Prostate gland (tissue), 2 donors: ENCODE measurements at regions of chr2 and their contacts with region 1.

Region 1: GRCh38 chr2:36461039-36461681 is 105.6 kb downstream of the CRIM1 start:
- DNase-seq: no peak
- H3K4me3 ChIP-seq: no peak overlapping the region
- H3K27ac ChIP-seq: peak overlapping the region in 1 of 2 donors; percentile 23
- H3K4me1 ChIP-seq: no peaks in the 10 kb centered on the region
- H3K27me3 ChIP-seq: no peaks in the 10 kb centered on the region
- CTCF ChIP-seq: no peak
- POLR2A ChIP-seq: no peak

Region 2: DNA sequence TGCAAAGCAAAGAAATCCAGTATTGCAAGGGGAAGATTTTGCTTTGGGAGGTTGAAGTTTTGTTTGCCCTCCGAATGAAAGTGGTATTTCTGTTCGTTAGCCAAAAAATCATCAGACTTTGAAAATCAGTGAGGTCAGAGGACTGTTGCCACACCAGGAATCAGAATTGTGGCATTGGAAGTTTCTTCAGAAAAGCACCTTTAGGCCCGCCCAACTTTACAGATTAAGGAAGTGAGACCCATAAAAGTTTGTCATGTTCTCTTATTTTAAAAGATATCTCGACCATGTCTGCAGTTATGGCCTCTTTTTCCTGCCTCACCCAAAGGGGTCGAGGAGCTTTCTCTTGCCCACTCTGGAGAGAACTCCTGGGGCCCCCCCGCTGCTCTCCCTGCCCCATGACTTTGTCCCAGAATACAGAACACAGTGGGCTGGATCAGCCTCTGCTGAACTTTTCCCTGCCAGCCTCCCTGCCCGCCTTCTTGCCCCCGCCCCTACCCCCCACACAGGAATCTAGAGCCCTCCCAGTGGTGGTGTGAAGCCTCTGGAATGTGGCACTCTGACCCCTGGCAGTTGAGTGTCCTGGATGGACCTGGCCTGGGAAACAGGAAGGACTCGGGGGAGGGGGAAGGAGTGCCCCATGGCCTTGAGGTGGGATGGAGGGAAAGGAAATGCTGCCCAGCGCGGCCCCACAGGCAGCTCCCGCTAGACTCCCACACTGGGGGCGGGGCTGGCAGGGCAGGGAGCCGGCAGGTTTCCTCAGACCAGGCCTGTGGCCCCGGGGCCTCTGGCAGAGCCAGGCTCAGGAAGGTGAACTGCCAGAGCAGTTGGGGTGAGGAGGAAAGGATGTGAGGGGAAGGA is 80.3 kb before region 1 on chr2:
- intact Hi-C with region 1: no loop called
- DNase-seq: no peak
- H3K4me3 ChIP-seq: no peak overlapping the region
- H3K27ac ChIP-seq: no peak overlapping the region
- H3K4me1 ChIP-seq: no peaks in the 10 kb centered on the region
- H3K27me3 ChIP-seq: no peaks in the 10 kb centered on the region
- CTCF ChIP-seq: no peak
- POLR2A ChIP-seq: no peak

Region 3: GRCh38 chr2:36497570-36498163 is 36.5 kb after region 1 on chr2:
- intact Hi-C with region 1: loop called (anchors 5 kb)
- DNase-seq: no peak
- H3K4me3 ChIP-seq: no peak overlapping the region
- H3K27ac ChIP-seq: no peak overlapping the region
- H3K4me1 ChIP-seq: no peaks in the 10 kb centered on the region
- H3K27me3 ChIP-seq: no peaks in the 10 kb centered on the region
- CTCF ChIP-seq: no peak
- POLR2A ChIP-seq: no peak

Region 4: GRCh38 chr2:36695746-36696415 is 234.7 kb after region 1 on chr2:
- intact Hi-C with region 1: no loop called
- DNase-seq: no peak
- H3K4me3 ChIP-seq: no peak overlapping the region
- H3K27ac ChIP-seq: no peak overlapping the region
- H3K4me1 ChIP-seq: no peaks in the 10 kb centered on the region
- H3K27me3 ChIP-seq: no peaks in the 10 kb centered on the region
- CTCF ChIP-seq: peak in 2 of 4 experiments; percentile 21 to 26
- POLR2A ChIP-seq: no peak

Region 5: DNA sequence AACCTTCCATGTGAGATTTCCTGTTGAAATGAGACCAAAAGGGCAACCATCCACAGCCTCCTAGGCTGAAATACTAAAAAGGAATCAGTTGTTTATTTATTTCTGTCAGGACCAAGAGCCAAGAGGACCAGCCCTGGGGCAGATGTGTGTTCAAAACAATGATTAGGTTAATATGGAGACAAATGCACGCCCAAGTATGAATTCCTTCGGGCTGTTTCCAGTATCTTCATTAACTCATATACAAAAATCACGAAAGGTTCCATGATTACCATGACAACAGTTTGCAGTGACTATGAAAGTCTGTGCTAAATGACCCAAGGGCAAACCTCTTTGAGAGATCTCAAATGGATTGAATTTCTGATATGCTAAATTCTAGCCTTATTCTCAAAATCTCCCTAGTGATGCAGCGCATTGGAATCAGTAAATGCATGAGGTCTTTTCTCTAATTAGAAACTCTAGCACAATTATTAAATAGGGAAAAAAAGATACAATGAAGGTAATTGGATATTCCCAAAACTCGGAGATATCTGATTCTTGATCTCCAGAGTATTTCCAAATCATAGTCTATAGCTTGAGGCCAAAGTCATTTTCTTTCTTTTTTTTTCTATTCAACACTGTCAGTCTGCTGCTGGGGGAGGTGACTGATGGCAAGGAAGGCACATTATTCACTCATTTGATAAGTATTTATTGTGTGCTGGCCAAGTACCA is 270.9 kb after region 1 on chr2:
- intact Hi-C with region 1: no loop called
- DNase-seq: no peak
- H3K4me3 ChIP-seq: no peak overlapping the region
- H3K27ac ChIP-seq: no peak overlapping the region
- H3K4me1 ChIP-seq: no peaks in the 10 kb centered on the region
- H3K27me3 ChIP-seq: no peaks in the 10 kb centered on the region
- CTCF ChIP-seq: no peak
- POLR2A ChIP-seq: no peak

Region 6: GRCh38 chr2:36878429-36878828 is 417.3 kb after region 1 on chr2:
- intact Hi-C with region 1: no loop called
- DNase-seq: no peak
- H3K4me3 ChIP-seq: no peak overlapping the region
- H3K27ac ChIP-seq: no peak overlapping the region
- H3K4me1 ChIP-seq: no peaks in the 10 kb centered on the region
- H3K27me3 ChIP-seq: no peaks in the 10 kb centered on the region
- CTCF ChIP-seq: no peak
- POLR2A ChIP-seq: no peak